Psoas muscle (tissue), 8 donors: ENCODE measurements at regions of chr6 and their contacts with region 1.

Region 1: DNA sequence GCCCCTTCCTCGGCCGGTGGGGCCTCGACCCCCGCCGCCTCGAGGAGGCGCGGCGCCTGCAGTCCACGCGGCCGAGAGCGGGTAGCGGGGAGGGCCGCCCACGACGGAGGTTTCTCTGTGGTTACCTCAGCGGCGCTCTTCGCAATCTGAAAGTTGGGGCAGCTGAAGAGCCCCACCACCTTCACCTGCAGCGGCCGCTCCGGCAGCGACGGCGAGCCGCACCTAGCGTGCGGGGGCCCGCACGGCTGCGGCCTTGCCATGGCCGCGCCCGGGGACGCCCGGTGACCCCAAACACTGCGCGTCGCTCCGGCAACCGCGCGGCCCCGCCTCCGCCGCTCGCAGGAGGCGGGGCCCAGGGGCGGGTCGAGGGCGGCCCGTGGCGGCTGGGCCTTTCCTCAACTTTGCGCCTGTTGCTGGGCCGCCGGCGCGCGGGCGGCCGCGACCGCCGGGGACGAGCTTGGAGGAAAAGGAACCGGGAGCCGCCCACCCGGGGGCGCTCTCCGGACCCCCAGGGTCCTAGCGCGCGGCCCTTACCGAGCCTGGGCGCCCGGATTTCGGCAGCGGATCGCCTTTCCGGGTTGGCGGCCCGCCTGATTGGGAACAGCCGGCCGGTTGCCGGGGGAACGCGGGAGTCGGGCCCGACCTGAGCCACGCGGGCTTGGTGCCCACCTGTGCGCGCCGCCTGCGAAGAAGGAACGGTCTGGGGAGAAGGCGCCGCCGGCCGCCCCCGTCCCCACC is at the starts of genes PPIL6 and SMPD2:
- DNase-seq: peak; percentile 92 to 95
- ATAC-seq: peak; percentile 90 to 94 (median 94)
- H3K4me3 ChIP-seq: peak within 1 kb of the TSS; percentile 70
- H3K27ac ChIP-seq: peak within 1 kb of the TSS; percentile 84
- H3K4me1 ChIP-seq: peaks cover 17% of the 10 kb centered on the region
- H3K27me3 ChIP-seq: no peaks in the 10 kb centered on the region
- CTCF ChIP-seq: peak; percentile 39
- total RNA-seq, gene PPIL6: 1.1 to 3.1 (median 2.6) TPM
- total RNA-seq, gene SMPD2: 2.1 to 5.1 (median 3.3) TPM

Region 2: GRCh38 chr6:109255946-109256640 is 184.4 kb before region 1 on chr6:
- intact Hi-C with region 1: no loop called
- DNase-seq: no peak
- ATAC-seq: no peak
- H3K4me3 ChIP-seq: no peak overlapping the region
- H3K27ac ChIP-seq: no peak overlapping the region
- H3K4me1 ChIP-seq: no peaks in the 10 kb centered on the region
- H3K27me3 ChIP-seq: no peaks in the 10 kb centered on the region
- CTCF ChIP-seq: no peak

Region 3: DNA sequence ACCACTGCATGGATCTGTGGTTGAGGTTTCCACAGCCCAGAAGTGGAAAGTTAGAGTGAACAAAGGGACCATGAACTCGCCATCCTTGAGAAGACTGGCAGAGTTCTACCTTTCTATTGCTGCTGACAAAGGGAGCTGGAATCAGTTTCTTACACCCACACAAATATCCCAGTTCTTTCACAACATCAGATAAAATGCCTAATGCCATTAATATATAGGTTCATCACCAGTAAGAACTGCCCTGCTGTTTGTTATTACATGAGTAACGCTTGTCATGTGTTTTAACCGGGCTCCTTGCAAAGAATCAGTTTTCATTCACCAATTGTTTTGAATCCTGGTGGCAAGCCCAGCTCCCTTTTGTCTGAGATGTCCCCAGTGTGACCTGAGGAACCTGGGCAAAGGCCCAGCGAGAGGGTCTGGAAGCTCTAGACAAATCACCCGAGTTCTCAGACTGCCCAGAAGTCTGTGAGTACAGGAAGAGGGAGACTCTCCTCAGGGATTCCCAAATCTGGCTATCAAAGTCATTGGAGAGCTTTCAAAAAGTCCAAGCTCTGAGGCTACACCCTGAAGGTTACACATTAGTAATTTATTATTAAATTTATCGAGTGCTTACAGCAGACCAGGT is 50.7 kb before region 1 on chr6:
- intact Hi-C with region 1: loop called in 1 of 2 experiments (anchors 5 kb)
- DNase-seq: no peak
- ATAC-seq: no peak
- H3K4me3 ChIP-seq: no peak overlapping the region
- H3K27ac ChIP-seq: no peak overlapping the region
- H3K4me1 ChIP-seq: peaks cover 8% of the 10 kb centered on the region
- H3K27me3 ChIP-seq: no peaks in the 10 kb centered on the region
- CTCF ChIP-seq: no peak

Region 4: DNA sequence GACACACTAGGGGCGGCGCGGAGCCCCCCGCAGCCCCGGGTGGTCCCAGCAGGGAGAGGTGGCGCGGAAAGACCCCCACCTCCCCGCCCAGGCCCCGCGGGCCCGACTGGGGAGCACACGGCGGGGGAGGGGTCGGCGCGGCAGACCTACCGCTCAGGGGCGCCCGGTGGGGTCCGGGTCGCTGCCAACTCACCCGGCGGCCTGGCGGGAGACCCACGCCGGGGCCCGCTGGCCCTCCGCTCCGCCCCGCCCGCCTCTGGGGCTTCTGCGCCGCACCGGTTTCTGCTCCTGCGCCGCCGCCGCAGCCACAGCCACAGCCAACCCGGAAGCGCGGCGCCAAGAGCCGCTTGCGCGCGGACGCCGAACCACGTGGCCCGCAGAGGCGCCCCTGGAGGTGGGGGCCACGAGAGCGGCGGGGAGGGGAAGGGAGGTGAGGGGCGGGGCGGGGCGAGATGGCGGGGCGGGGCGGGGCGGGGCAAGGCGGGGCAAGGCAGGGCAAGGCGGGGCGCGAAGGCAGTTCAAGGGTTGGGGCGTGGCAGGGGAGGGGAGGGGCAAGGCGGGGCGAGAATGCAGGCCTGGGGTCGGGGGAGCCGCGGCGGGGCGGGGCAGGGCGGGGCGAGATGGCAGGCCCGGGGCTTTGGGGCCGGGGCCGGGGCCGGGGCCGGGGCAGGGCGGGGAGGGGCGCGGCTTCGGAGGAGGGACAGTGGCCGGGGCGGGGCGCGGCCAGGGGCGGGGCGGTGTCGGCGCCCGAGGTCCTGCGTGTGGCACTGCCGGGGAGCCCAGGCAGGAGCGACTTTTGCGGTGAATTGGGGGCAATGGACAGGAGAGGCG is 42.6 kb after region 1 on chr6 and contains the start of gene ZBTB24:
- intact Hi-C with region 1: loop called in 1 of 2 experiments (anchors 2 kb)
- DNase-seq: peak; percentile 92 to 96
- ATAC-seq: peak; percentile 94 to 96 (median 96)
- H3K4me3 ChIP-seq: peak within 1 kb of the TSS; percentile 96
- H3K27ac ChIP-seq: peak within 1 kb of the TSS; percentile 91
- H3K4me1 ChIP-seq: peaks cover 38% of the 10 kb centered on the region
- H3K27me3 ChIP-seq: no peaks in the 10 kb centered on the region
- CTCF ChIP-seq: no peak
- total RNA-seq, gene ZBTB24: 4.4 to 5.8 (median 5.4) TPM